Panc1 (cell line): ENCODE measurements at regions of chr3 and their contacts with region 1.

Region 1: GRCh38 chr3:157532529-157533297 is 29.5 kb upstream of the VEPH1 start:
- DNase-seq: peak; percentile 42
- ATAC-seq: peak; percentile 94
- H3K4me3 ChIP-seq: no peak overlapping the region
- H3K27ac ChIP-seq: no peak overlapping the region
- H3K4me1 ChIP-seq: no peaks in the 10 kb centered on the region
- H3K27me3 ChIP-seq: no peaks in the 10 kb centered on the region; the same call in 1 of the 2 replicates
- CTCF ChIP-seq: peak; percentile 82

Region 2: GRCh38 chr3:157335198-157336076 is 197.3 kb before region 1 on chr3:
- CTCF ChIA-PET with region 1: no interaction called
- POLR2A ChIA-PET with region 1: no interaction called
- in situ Hi-C with region 1: no loop called
- intact Hi-C with region 1: no loop called
- DNase-seq: no peak
- ATAC-seq: peak; percentile 93
- H3K4me3 ChIP-seq: 0 out of 4 replicates have a peak overlapping the region, but pooled peaks of 1 of the 2 experiments have one; percentile 19
- H3K27ac ChIP-seq: no peak overlapping the region
- H3K4me1 ChIP-seq: peaks cover 5% of the 10 kb centered on the region; the same call in 1 of the 2 replicates
- H3K27me3 ChIP-seq: no peaks in the 10 kb centered on the region
- CTCF ChIP-seq: no peak

Region 3: DNA sequence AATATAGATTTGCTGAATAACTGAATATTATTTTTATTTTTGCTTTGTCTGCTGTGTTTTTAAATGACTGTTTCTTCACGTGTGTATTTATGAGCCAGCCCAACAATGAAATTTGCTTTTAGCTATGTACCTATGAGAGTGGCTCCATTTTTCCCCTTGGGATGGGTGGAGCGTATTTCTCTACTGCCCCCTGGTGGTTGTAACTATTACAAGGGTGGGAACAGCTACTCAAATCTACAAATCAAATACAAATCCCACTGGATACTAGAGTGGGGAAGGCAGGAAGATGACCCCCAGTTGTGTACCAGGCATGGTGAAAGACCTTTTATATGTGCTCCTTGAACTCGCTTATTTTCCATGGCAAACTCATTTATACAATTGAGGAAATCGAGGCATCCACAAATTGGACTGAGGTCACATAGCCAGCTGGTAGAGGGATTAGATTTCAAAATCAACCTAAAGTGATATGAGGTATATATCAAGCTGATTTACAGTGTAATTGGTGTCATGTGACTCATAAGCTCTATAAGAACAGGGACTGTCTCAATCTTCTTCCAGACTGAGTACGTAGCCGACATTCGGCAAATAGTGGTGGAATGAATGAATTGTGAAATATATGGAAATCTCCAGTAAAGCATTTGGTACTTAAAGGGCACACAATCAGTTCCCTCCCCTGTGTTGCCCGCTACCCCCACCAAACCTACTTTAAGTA is 40.0 kb after region 1 on chr3:
- CTCF ChIA-PET with region 1: interaction called, 55 read pairs
- POLR2A ChIA-PET with region 1: no interaction called
- in situ Hi-C with region 1: no loop called
- intact Hi-C with region 1: loop called (anchors 1 kb)
- DNase-seq: peak; percentile 32
- ATAC-seq: peak; percentile 84
- H3K4me3 ChIP-seq: no peak overlapping the region
- H3K27ac ChIP-seq: no peak overlapping the region
- H3K4me1 ChIP-seq: no peaks in the 10 kb centered on the region
- H3K27me3 ChIP-seq: no peaks in the 10 kb centered on the region
- CTCF ChIP-seq: peak; percentile 89

Region 4: GRCh38 chr3:157872902-157873301 is 340.2 kb after region 1 on chr3:
- CTCF ChIA-PET with region 1: no interaction called
- POLR2A ChIA-PET with region 1: no interaction called
- in situ Hi-C with region 1: no loop called
- intact Hi-C with region 1: no loop called
- DNase-seq: no peak
- ATAC-seq: no peak; the same call in 1 of the 2 replicates
- H3K4me3 ChIP-seq: no peak overlapping the region
- H3K27ac ChIP-seq: no peak overlapping the region
- H3K4me1 ChIP-seq: no peaks in the 10 kb centered on the region
- H3K27me3 ChIP-seq: no peaks in the 10 kb centered on the region
- CTCF ChIP-seq: no peak